Calu3 (cell line): ENCODE measurements at regions of chr1 and their contacts with region 1.

Region 1: DNA sequence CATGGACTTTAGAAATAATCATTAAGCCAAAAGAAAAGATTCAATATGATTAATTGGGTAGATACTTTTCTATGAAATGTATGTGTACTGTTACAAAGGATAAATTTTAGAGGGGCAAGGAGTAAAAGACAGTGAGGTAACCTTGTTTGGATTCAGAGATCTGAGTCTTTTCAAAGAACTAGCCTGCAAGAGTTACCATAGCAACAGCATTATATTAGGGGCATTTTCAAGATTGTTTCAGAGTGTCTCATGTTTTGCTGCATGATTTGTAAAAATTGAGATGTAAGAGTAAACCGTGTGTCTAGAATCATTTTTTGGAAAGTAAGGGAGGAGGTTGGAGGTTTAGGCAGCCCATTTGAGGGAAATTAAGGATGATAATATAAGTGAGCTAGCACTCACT is 70.6 kb upstream of the KIAA1614 start:
- DNase-seq: no peak
- H3K4me3 Mint-ChIP-seq: no peak overlapping the region
- H3K27ac Mint-ChIP-seq: no peak overlapping the region
- H3K4me1 Mint-ChIP-seq: peaks cover 12% of the 10 kb centered on the region
- H3K27me3 Mint-ChIP-seq: no peaks in the 10 kb centered on the region
- CTCF ChIP-seq: no peak

Region 2: DNA sequence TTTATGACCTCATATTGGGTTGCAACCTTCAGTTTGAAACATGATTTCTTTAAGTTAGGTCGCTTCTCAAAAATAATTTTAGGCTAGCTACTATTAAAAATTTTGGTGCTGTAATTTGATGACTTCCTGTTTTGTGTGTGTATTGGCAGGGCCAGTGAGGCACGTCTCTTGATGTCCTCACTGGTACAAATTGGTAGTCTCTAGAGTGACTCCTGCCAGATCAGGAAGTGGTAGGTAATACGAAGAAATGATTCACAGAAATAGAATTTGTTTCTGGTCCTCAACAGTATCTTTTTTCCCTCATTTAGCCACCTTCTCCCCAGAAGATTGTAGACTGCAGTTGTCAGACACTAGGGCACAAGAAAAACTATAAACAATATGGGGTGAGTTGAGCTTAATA is 50.2 kb before region 1 on chr1:
- CTCF ChIA-PET with region 1: no interaction called
- intact Hi-C with region 1: loop called (anchors 5 kb)
- DNase-seq: no peak
- H3K4me3 Mint-ChIP-seq: no peak overlapping the region
- H3K27ac Mint-ChIP-seq: no peak overlapping the region
- H3K4me1 Mint-ChIP-seq: no peaks in the 10 kb centered on the region
- H3K27me3 Mint-ChIP-seq: no peaks in the 10 kb centered on the region
- CTCF ChIP-seq: no peak